PC-3 (cell line): ENCODE measurements at regions of chr10 and their contacts with region 1.

Region 1: DNA sequence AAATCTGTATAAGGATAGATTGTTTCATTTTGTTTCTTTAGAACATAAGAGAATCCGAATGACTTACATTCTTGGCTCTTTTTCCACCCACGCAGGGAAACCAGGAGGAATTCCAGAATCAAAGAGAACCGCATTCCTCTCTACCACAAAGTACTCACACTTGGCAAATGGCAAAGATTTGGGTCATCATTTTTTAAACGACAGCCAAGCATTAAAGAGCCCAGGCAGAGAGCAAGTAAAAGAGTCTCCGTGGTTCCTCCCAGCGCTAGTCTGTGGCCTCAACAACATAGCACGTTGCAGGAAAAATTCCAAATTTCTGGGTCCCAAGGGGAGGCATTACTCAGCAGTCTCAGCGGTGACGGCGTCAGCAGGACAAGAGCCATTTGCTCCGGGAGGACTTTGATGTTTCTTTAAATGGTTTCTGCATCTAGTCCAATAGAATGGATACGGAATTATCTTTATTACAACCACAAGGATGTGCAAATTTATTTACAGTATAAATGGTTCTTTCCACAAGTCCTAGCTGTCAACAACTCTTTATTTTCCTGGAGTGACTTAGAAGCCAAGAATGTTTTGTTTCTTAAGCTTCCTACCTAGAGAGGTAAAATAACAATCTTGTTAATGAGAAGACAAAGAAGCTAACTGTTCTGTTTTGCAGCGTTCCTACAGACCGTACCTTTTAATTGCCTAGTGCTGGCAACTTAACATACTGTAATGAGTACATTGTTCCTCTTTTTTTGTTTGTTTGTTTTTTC is 232.5 kb downstream of the SKIDA1 start:
- DNase-seq: peak; percentile 92
- ATAC-seq: peak; percentile 89
- H3K4me3 ChIP-seq: peak overlapping the region; percentile 60
- H3K27ac ChIP-seq: peak overlapping the region; percentile 55
- H3K4me1 ChIP-seq: peaks cover 14% of the 10 kb centered on the region
- H3K27me3 ChIP-seq: no peaks in the 10 kb centered on the region
- CTCF ChIP-seq: no peak

Region 2: GRCh38 chr10:21100190-21100589 is 192.8 kb before region 1 on chr10:
- CTCF ChIA-PET with region 1: no interaction called
- POLR2A ChIA-PET with region 1: no interaction called
- intact Hi-C with region 1: no loop called
- DNase-seq: no peak
- ATAC-seq: no peak
- H3K4me3 ChIP-seq: no peak overlapping the region
- H3K27ac ChIP-seq: peak overlapping the region; percentile 93
- H3K4me1 ChIP-seq: peaks cover 36% of the 10 kb centered on the region
- H3K27me3 ChIP-seq: no peaks in the 10 kb centered on the region
- CTCF ChIP-seq: no peak

Region 3: DNA sequence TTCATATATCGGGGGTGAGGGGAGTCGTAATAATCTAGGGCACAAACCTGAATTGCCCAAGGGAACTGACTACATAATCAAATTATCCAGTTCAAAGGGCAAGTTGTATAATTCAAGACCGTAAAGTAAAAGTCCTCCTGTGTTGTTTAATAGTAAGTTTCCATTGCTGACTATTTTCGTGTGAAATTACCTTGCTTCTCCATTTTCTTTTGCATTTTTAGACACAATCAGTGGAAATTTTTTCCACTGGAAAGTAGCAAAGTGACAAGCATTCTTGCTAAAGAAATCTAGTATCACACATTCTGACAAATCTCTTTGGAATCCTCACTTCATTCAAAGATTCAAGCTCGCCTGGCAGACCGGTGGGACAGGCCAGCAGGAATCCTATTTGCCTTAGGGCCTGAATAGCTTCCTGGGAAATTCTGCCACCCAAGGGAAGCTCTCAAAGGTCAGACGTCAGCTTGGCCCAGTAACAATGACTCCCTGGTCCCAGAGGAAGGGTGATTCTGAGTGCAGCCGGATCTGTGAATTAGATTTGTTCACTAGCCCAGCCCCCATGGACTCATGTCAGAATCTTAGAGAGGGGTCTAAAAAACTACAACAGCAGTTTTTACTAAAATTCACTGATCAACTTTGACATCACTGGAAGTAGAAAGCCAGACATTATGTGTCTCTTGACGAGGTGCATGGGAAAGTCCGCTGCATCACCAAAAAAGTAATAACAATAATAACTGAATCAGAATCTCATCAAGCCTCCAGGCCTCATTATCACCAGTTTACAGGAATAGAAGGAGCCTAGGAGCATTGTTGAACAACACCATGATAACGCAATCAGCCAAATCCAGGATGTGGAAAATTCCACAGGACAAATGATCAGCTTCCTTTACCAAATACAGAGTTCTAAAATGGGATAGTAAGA is 71.5 kb after region 1 on chr10:
- CTCF ChIA-PET with region 1: no interaction called
- POLR2A ChIA-PET with region 1: no interaction called
- intact Hi-C with region 1: loop called (anchors 5 kb)
- DNase-seq: peak; percentile 97
- ATAC-seq: peak; percentile 89
- H3K4me3 ChIP-seq: peak overlapping the region; percentile 51
- H3K27ac ChIP-seq: peak overlapping the region; percentile 98
- H3K4me1 ChIP-seq: peaks cover 36% of the 10 kb centered on the region
- H3K27me3 ChIP-seq: no peaks in the 10 kb centered on the region
- CTCF ChIP-seq: no peak